Calu3 (cell line): ENCODE measurements at regions of chr4 and their contacts with region 1.

Region 1: DNA sequence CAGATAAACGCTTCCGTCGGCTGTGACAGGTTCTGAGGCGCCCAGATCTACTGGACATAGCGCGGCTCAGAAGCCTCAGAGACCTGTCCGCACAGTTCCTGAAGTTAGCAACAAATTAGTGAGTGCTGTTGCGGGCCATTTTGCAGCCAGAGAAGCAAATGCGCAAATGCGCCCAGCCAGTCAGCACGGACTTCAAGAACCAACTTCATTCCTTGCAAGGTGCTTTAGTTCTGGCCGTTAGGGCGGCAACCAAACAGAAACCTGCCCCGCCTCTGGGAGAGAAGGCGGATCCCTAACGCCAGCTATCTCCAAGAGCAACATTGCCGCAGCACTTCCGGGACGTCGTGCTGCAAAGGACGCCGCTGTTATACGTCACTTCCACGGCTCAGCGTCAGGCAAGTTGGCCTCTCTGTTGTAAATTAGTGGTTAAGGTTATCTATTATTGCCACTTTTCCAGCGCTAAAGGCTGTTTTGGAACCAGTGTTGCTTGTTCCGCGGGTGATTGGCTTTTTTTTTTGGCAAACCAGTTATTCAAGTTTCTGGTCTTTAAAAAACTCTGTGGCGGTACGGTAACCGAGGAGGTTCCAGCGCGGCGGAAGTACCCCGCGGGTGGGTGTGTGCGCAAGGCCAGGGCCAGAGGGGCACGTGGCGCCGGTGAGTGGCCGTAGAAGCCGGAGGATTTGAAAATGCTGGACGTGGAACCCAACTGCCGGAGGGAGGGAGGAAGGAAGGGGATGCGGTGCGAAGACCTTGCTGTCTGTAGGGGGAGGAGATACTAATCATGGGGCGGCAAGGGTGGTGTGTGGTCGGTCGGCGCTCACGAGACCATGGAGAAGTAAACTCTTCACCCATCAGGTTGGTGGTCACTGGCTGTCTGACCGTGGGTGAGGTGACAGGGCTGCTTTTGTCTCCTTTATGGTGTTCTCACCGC is at the start of gene GAR1:
- DNase-seq: peak; percentile 79
- H3K4me3 Mint-ChIP-seq: peak within 1 kb of the TSS; percentile 78
- H3K27ac Mint-ChIP-seq: peak within 1 kb of the TSS; percentile 75
- H3K4me1 Mint-ChIP-seq: peaks cover 24% of the 10 kb centered on the region
- H3K27me3 Mint-ChIP-seq: no peaks in the 10 kb centered on the region
- CTCF ChIP-seq: no peak
- total RNA-seq, gene GAR1: 20.8 and 23.7 TPM in 2 replicates

Region 2: DNA sequence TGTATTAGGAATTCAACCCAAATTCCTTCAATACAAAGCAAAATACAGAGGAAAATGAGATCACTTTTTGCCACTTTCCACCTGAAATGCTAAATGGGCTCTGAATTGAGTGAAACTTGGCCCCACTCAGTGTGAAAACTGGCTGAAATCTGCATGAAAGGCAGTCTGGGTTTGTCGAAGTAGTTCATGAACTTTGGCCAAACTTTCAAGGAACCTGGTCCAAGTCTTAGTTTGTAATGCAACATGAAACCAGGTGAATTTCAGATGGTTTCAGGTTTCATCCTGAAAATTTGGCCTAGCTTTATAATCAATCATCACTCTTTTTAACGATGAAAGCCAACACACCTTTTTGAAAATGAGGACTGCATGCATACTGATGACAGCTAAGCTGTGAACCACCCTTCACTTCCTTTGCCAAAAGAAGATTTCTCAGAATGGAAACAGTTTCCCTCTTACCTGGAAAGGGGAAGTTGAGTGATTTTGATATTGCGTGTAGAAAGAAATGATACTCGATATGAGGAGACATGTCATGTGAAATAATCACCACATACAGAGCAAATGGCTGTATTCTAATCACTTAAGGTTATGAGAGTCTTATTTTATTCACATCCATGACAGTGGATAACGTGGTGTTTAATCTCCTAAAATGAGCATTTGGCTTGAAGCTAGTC is 842.7 kb before region 1 on chr4:
- CTCF ChIA-PET with region 1: no interaction called
- intact Hi-C with region 1: no loop called
- DNase-seq: no peak
- H3K4me3 Mint-ChIP-seq: no peak overlapping the region
- H3K27ac Mint-ChIP-seq: no peak overlapping the region
- H3K4me1 Mint-ChIP-seq: no peaks in the 10 kb centered on the region
- H3K27me3 Mint-ChIP-seq: no peaks in the 10 kb centered on the region
- CTCF ChIP-seq: no peak

Region 3: GRCh38 chr4:109836986-109837385 is 21.6 kb after region 1 on chr4:
- CTCF ChIA-PET with region 1: no interaction called
- intact Hi-C with region 1: no loop called
- DNase-seq: no peak
- H3K4me3 Mint-ChIP-seq: no peak overlapping the region
- H3K27ac Mint-ChIP-seq: no peak overlapping the region
- H3K4me1 Mint-ChIP-seq: no peaks in the 10 kb centered on the region
- H3K27me3 Mint-ChIP-seq: no peaks in the 10 kb centered on the region
- CTCF ChIP-seq: no peak

Region 4: GRCh38 chr4:109977854-109978501 is 162.6 kb after region 1 on chr4:
- CTCF ChIA-PET with region 1: no interaction called
- intact Hi-C with region 1: loop called (anchors 1 kb)
- DNase-seq: peak; percentile 9
- H3K4me3 Mint-ChIP-seq: no peak overlapping the region
- H3K27ac Mint-ChIP-seq: no peak overlapping the region
- H3K4me1 Mint-ChIP-seq: peaks cover 7% of the 10 kb centered on the region
- H3K27me3 Mint-ChIP-seq: no peaks in the 10 kb centered on the region
- CTCF ChIP-seq: no peak

Region 5: DNA sequence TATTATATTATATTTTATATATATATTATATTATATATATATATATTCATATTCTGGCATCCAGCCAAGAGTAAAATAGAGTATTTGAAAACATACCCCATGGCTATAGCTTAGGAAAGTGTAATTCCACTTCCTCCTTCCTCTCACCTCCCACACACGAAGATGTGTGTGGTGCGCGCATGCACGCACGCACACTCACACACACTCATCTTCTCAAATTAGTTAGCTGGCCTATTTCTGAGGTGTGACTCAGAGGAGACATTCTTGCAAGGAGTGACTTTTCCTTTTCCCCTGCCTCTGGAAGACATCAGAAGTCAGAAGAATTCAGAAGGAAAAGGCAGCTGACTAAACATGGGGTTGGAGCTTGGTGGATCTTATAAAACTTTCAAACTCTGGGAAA is 669.3 kb after region 1 on chr4:
- CTCF ChIA-PET with region 1: no interaction called
- intact Hi-C with region 1: no loop called
- DNase-seq: no peak
- H3K4me3 Mint-ChIP-seq: no peak overlapping the region
- H3K27ac Mint-ChIP-seq: no peak overlapping the region
- H3K4me1 Mint-ChIP-seq: peaks cover 11% of the 10 kb centered on the region
- H3K27me3 Mint-ChIP-seq: no peaks in the 10 kb centered on the region
- CTCF ChIP-seq: no peak